ENCODE measurements at regions of chr3 and their contacts with region 1.

Region 1: DNA sequence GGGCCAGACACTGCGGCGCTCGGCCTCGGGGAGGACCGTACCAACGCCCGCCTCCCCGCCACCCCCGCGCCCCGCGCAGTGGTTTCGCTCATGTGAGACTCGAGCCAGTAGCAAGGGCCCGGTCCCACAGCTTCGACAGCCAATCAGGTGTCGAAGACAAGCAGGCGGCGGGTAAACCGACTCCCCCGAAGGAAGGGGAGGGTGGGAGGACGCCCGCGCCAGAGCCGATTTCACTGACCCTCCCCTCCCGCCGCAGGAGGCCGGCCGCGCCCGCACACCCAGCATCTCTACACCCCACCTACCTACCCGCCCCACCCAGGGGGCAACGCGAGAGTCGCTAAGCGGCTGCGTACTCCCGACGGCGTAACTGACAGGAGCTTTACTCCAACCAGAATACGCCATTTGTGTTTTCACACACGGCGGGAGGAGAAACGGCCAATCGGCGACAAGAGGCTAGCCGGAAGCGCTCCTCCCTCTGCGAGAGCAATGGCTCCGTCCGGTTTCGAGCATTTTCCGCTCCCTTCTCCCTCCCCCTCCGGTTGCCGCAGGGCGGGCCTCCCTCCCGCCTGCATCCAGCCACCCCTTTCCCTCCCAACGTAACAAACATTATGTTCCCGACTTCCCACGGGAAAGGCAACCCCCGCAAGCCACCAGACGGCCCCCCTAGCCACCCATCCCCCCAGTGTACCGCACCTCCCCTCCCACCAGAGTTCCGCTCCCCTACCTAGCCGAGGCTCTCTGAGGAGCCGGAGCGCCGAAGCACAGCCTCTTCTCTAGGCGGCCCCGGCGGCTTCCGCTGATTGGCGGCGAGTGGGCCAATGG is 504 bp upstream of the SETD5 start:
- DNase-seq: peak; percentile 92 to 100 (median 96)
- ATAC-seq: peak; percentile 80
- H3K4me3 ChIP-seq: peak overlapping the region; percentile 74
- H3K27ac ChIP-seq: peak overlapping the region; percentile 96
- H3K4me1 ChIP-seq: peaks cover 0 to 30% of the 10 kb centered on the region in 2 experiments; a peak in 4 of 5 replicates
- H3K27me3 ChIP-seq: no peaks in the 10 kb centered on the region
- CTCF ChIP-seq: no peak; a peak in 2 of 6 replicates
- EP300 ChIP-seq: peak; percentile 31
- POLR2A ChIP-seq: peak; percentile 97
- RAD21 ChIP-seq: no peak

Region 2: DNA sequence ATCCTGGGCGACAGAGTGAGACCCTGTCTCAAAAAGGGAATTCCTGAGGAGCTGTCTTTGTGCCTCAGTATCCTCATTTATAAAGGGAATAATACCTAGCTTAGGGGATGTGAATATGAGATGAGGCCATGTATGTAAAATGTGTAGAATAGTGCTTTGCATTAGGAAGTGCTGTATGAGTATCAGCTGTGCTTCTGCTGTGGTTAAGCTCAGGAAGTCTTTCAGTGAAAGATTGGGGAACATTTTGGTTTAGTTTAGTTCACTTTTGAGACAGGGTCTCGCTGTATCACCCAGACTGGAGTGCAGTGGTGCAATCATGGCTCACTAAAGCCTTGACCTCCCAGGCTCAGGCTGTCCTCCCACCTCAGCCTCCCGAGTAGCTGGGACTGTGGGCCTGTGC is 23.4 kb before region 1 on chr3:
- CTCF ChIA-PET with region 1: no interaction called
- POLR2A ChIA-PET with region 1: interaction called, 63 read pairs
- in situ Hi-C with region 1: no loop called
- intact Hi-C with region 1: no loop called
- DNase-seq: no peak
- ATAC-seq: no peak
- H3K4me3 ChIP-seq: no peak overlapping the region
- H3K27ac ChIP-seq: no peak overlapping the region
- H3K4me1 ChIP-seq: no peaks in the 10 kb centered on the region
- H3K27me3 ChIP-seq: no peaks in the 10 kb centered on the region
- CTCF ChIP-seq: no peak
- EP300 ChIP-seq: no peak
- POLR2A ChIP-seq: no peak
- RAD21 ChIP-seq: no peak

Region 3: DNA sequence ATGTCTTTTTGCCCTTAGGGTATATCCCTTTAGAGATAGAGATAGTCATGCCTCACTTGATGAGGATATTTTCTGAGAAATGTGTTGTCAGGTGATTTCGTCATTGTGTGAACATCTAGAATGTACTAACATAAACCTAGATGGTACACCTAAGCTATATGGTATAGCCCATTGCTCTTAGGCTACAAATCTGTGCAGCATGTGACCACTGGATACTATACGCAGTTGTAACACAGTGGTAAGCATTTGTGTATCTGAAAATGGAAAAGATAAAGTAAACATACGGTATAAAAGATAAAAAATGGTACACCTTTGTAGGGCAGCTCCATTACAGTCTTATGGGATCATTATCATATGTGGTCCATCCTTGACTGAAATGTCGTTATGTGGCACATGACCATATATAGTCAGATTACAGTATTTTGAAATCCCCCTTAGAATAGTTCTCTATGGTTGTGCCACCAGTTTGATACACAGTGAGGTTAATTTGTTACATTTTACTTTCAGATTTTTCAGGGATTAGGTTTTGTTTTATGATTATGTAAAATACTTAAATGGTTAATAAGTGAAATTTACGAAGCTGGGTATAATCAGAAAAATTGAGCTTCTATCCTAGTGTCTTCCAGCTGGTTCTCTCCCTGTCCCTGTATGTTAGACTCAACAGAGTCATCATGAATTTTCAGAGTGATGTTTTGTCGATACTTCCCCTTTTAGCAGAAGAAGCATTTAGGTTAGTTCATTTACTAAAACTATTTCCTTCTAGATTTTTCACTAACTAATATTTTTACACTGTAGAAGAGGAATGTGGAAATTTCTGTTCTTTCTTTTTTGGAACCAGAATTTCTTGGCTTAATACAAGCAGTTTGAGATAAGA is 13.3 kb after region 1 on chr3:
- CTCF ChIA-PET with region 1: no interaction called
- POLR2A ChIA-PET with region 1: interaction called, 95 read pairs
- in situ Hi-C with region 1: no loop called
- intact Hi-C with region 1: no loop called
- DNase-seq: no peak
- ATAC-seq: peak; percentile 74
- H3K4me3 ChIP-seq: no peak overlapping the region
- H3K27ac ChIP-seq: peak overlapping the region; percentile 8; the same call in 1 of the 3 replicates
- H3K4me1 ChIP-seq: peaks cover 3 to 30% of the 10 kb centered on the region in 2 experiments; a peak in 3 of 5 replicates
- H3K27me3 ChIP-seq: no peaks in the 10 kb centered on the region
- CTCF ChIP-seq: no peak
- EP300 ChIP-seq: peak; percentile 50; the same call in 1 of the 2 replicates
- POLR2A ChIP-seq: no peak
- RAD21 ChIP-seq: no peak

Region 4: DNA sequence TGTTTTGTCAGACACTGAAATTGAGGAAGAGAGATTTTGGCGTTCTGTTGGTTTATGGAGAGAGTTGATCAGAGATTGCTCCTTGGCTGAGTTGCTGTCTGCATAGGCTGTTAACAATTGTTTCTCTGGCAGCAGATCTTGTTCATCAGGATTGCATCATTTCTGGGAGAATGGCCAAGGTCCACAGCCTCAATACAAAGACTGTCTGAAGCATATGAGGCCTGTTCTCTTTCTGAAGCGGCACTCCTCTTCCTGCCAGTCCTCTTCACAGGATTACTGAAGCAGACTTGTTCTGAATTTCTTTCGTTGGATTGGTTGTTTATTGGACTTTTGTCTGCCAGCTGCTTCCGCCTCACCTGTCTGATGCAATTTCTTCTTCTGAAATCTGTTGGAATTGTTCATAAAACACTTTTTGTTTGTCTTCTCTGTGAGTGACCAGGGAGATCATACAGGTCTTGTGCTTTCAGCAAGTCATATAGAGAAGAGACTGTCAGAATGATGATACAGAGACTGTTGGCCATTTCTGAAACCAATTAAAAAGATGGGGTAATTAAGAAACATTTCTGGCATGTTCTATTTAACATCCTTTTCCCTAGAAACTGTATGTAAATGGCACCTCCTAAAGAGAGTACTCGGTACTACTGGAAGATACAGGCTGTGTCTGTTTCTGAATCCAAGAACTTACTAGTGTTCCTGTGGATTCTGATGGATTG is 26.0 kb after region 1 on chr3:
- CTCF ChIA-PET with region 1: interaction called, 5 read pairs
- POLR2A ChIA-PET with region 1: interaction called, 150 read pairs
- in situ Hi-C with region 1: no loop called
- intact Hi-C with region 1: loop called (anchors 1 kb)
- DNase-seq: peak; percentile 53 to 91 (median 66)
- ATAC-seq: peak; percentile 92
- H3K4me3 ChIP-seq: no peak overlapping the region
- H3K27ac ChIP-seq: peak overlapping the region; percentile 77
- H3K4me1 ChIP-seq: peaks cover 0 to 21% of the 10 kb centered on the region in 2 experiments; a peak in 3 of 5 replicates
- H3K27me3 ChIP-seq: no peaks in the 10 kb centered on the region
- CTCF ChIP-seq: peak; percentile 48 to 78 (median 66); a peak in 5 of 6 replicates
- EP300 ChIP-seq: peak; percentile 87
- POLR2A ChIP-seq: no peak
- RAD21 ChIP-seq: peak; percentile 75 to 94

Region 5: GRCh38 chr3:9649791-9650521 is 253.0 kb after region 1 on chr3:
- CTCF ChIA-PET with region 1: no interaction called
- POLR2A ChIA-PET with region 1: interaction called, 3 read pairs
- in situ Hi-C with region 1: no loop called
- intact Hi-C with region 1: loop called (anchors 5 kb)
- DNase-seq: peak; percentile 34 to 49 (median 38)
- ATAC-seq: no peak
- H3K4me3 ChIP-seq: peak overlapping the region; percentile 95
- H3K27ac ChIP-seq: peak overlapping the region; percentile 72
- H3K4me1 ChIP-seq: peaks cover 13 to 23% of the 10 kb centered on the region in 2 experiments; a peak in 4 of 5 replicates
- H3K27me3 ChIP-seq: no peaks in the 10 kb centered on the region
- CTCF ChIP-seq: no peak
- EP300 ChIP-seq: no peak
- POLR2A ChIP-seq: no peak
- RAD21 ChIP-seq: no peak

Measured in K562 (cell line).